ENCODE measurements at regions of chr6 and their contacts with region 1.

Region 1: DNA sequence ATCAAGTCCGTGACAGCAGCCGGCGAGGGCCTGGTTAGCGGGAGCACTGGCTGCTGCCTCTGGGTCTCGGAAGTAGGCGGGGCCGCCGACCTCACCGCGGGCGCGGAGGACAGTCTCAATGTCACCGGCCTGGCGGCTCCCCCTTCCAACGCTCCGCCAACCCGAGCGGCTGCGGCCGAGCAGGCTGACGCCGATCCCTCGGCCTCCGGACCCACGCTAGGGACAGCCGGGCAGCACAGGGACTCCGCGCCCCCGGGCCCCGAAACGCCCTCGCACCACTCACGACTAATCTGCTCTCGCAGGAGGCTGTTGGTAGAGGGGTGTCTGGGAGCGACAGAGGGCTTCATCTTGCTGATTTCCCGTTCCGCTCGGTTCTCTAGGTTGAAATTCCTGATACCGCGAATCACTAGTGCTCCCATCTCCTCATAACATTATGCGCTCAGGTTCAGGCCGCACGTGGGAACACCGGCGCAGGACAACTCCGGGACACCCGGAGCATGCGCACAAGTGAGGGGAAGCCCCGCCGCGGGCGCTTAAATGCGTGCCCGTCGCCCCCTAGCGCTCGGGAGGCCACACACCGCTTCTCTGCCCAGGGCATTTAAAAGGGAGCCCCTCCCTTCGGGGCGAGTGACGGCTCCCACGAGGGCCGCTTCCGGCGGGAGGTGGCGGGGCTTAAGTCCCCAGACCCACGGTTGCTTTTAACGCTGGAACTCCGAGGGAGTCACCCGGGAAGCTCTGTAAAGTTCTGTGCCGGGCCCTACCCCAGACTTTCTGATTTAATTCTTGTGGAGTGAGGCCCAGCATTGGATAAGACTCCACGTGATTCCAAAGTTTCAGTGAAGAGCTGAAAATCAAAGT is at the start of gene NDUFAF4:
- DNase-seq: peak; percentile 95
- H3K4me3 ChIP-seq: peak within 1 kb of the TSS; percentile 95
- H3K27ac ChIP-seq: peak within 1 kb of the TSS; percentile 84 to 85
- H3K4me1 ChIP-seq: peaks cover 6 to 15% of the 10 kb centered on the region in 2 experiments; a peak in 3 of 4 replicates
- H3K27me3 ChIP-seq: no peaks in the 10 kb centered on the region
- CTCF ChIP-seq: peak; percentile 88
- EP300 ChIP-seq: 0 out of 4 replicates have a peak, but pooled peaks of 1 of the 2 experiments have one; percentile 6
- RAD21 ChIP-seq: peak; percentile 63
- polyA plus RNA-seq, gene NDUFAF4: 15.9 and 16.7 TPM in 2 replicates

Region 2: GRCh38 chr6:96837081-96837971 is 60.3 kb before region 1 on chr6 and contains the start of gene GPR63:
- CTCF ChIA-PET with region 1: interaction called, 27 read pairs
- POLR2A ChIA-PET with region 1: no interaction called
- DNase-seq: peak; percentile 90
- H3K4me3 ChIP-seq: peak within 1 kb of the TSS; percentile 92 to 97
- H3K27ac ChIP-seq: peak within 1 kb of the TSS; percentile 44 to 50; a peak in 3 of 4 replicates
- H3K4me1 ChIP-seq: peaks cover 0 to 8% of the 10 kb centered on the region in 2 experiments; a peak in 2 of 4 replicates
- H3K27me3 ChIP-seq: no peaks in the 10 kb centered on the region
- CTCF ChIP-seq: no peak
- EP300 ChIP-seq: no peak
- RAD21 ChIP-seq: no peak
- polyA plus RNA-seq, gene GPR63: 0.53 and 0.73 TPM in 2 replicates

Region 3: DNA sequence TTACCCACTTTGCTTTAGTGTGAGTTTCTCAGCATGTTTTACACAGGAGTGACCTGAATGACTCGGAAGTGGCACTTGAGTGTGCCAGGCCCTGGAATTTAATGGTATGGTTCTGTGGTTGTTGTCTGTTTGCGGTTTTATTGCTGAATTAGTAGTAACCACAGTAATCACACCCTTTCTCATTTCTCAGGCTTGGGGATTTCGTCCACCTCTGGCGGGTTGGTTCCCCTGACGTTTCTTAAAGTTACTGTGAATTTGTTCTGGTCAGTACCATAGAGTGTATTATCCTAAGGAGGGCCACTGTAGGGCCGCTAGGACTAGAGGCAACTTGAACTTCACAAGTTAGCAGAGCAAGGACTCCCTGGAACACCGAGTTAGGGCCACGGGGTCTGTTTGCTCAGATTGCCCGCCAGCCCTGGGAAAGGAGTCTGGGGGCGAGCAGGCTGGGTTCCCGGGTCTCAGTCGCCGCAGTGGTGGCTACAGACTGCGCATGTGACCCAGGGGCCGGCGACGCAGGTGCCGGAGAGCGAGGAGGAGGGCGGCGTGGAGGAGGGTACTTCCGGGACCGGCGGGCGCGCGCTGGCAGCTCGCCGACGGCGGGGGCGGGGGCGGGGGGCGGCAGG is 26.4 kb after region 1 on chr6:
- CTCF ChIA-PET with region 1: interaction called, 10 read pairs
- POLR2A ChIA-PET with region 1: no interaction called
- DNase-seq: peak; percentile 88
- H3K4me3 ChIP-seq: peak overlapping the region; percentile 56 to 59; a peak in 3 of 4 replicates
- H3K27ac ChIP-seq: peak overlapping the region in 1 of 2 experiments; percentile 39; a peak in 2 of 4 replicates
- H3K4me1 ChIP-seq: peaks cover 0 to 9% of the 10 kb centered on the region in 2 experiments; a peak in 2 of 4 replicates
- H3K27me3 ChIP-seq: peaks cover 14% of the 10 kb centered on the region; the same call in 1 of the 2 replicates
- CTCF ChIP-seq: no peak
- EP300 ChIP-seq: no peak
- RAD21 ChIP-seq: no peak

Region 4: DNA sequence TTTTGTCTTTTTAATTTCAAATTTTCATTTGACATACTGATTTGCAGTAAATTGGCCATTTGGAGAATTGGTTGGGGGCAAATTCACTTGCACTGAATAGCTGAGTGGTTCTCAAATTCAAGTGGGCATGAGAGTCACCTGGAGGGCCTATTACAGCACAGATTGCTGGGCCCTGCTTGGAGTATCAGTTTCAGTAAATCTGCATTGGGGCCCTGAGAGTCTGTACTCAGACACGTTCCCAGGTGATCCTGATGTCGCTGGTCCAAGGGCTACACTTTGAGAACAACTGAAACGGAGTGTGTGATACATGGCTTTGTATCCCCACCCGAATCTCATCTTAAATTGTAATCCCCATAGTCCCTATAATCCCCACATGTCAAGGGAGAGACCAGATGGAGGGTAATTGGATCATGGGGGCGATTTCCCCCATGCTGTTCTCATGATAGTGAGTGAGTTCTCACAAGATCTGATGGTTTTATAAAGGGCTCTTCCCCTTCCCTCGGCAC is 142.8 kb after region 1 on chr6:
- CTCF ChIA-PET with region 1: interaction called, 13 read pairs
- POLR2A ChIA-PET with region 1: no interaction called
- DNase-seq: no peak
- H3K4me3 ChIP-seq: no peak overlapping the region
- H3K27ac ChIP-seq: no peak overlapping the region
- H3K4me1 ChIP-seq: no peaks in the 10 kb centered on the region
- H3K27me3 ChIP-seq: no peaks in the 10 kb centered on the region
- CTCF ChIP-seq: no peak
- EP300 ChIP-seq: no peak
- RAD21 ChIP-seq: no peak

Region 5: GRCh38 chr6:97059473-97059872 is 161.9 kb after region 1 on chr6:
- CTCF ChIA-PET with region 1: interaction called, 120 read pairs
- POLR2A ChIA-PET with region 1: no interaction called
- DNase-seq: peak; percentile 57
- H3K4me3 ChIP-seq: peak overlapping the region in 1 of 2 experiments; percentile 2; a peak in 1 of 4 replicates
- H3K27ac ChIP-seq: no peak overlapping the region
- H3K4me1 ChIP-seq: no peaks in the 10 kb centered on the region
- H3K27me3 ChIP-seq: no peaks in the 10 kb centered on the region
- CTCF ChIP-seq: peak; percentile 79
- EP300 ChIP-seq: no peak
- RAD21 ChIP-seq: peak; percentile 85

Measured in SK-N-SH (cell line).